Right cardiac atrium (tissue), 5 donors: ENCODE measurements at regions of chr3 and their contacts with region 1.

Region 1: GRCh38 chr3:52536369-52537164 is at the start of gene UQCC5:
- DNase-seq: peak; percentile 99
- ATAC-seq: peak; percentile 93 to 94
- H3K4me3 ChIP-seq: peak within 1 kb of the TSS; percentile 65
- H3K27ac ChIP-seq: peak within 1 kb of the TSS; percentile 91
- H3K4me1 ChIP-seq: peaks cover 16% of the 10 kb centered on the region
- H3K27me3 ChIP-seq: no peaks in the 10 kb centered on the region
- total RNA-seq, gene UQCC5: 52.4 to 64.2 (median 62.4) TPM

Region 2: GRCh38 chr3:52481819-52482521 is 54.6 kb before region 1 on chr3:
- intact Hi-C with region 1: loop called in 1 of 4 experiments (anchors 5 kb)
- DNase-seq: peak; percentile 31 to 69 (median 64)
- ATAC-seq: no peak
- H3K4me3 ChIP-seq: no peak overlapping the region
- H3K27ac ChIP-seq: no peak overlapping the region
- H3K4me1 ChIP-seq: peaks cover 14% of the 10 kb centered on the region
- H3K27me3 ChIP-seq: no peaks in the 10 kb centered on the region